ENCODE measurements at regions of chr4 and their contacts with region 1.

Region 1: DNA sequence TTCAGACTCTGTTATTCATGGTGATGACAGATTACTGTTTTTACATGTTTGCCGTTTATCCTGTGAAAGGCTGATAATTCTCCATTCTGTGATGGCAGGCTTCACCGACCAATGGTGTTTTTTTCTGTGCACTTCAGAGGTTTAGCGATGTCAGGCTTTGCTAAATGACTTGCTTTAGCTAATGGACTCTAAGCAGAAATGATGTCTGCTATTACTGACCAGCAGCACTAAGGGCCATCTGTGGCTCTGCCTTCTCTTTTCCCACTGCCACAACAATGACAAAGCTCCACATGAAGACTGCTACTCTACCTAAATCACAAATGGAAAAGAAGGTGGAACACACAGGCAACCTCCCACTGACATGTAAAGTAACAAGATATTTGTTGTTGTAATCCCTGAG is 68.4 kb upstream of the ALB start:
- DNase-seq: no peak
- ATAC-seq: no peak
- H3K4me3 ChIP-seq: no peak overlapping the region
- H3K27ac ChIP-seq: no peak overlapping the region
- H3K4me1 ChIP-seq: no peaks in the 10 kb centered on the region
- H3K27me3 ChIP-seq: no peaks in the 10 kb centered on the region

Region 2: DNA sequence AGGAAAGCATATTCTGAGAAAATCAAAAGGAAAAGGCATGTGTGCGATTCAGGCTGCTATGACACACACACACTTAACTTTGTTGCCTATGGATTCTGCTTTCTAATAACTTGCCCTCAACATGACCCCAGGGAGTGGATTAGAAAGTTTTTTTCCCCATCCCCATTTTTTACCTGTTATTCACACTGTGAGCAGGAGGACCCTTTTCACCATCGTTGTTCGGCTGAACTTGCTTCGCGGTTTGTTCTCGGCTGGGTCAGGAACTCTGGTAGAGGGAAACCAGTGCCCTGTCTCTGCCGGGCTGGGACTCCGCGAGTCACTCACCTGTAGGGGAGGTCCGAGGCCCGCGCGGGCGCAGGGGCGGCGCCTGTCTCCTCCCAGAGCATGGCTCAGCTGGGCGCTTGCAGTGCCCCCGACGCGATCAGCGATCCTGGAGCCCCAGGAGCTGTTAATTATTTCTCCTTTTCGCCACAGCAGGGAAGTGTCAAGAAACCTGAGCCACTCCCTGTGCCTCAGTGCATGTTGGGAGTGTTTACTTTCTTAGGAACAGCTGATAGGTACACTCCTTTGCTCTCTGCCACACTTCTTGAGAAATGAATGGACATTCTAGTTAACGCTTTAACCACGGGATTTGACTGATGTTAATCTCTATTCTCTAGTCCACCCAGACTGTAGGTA is 284.6 kb after region 1 on chr4 and contains the start of gene RASSF6:
- intact Hi-C with region 1: loop called in 1 of 2 experiments (anchors 10 kb)
- DNase-seq: peak in 1 of 2 donors; percentile 72
- ATAC-seq: peak; percentile 52
- H3K4me3 ChIP-seq: no peak within 1 kb of the TSS
- H3K27ac ChIP-seq: no peak within 1 kb of the TSS
- H3K4me1 ChIP-seq: no peaks in the 10 kb centered on the region
- H3K27me3 ChIP-seq: peaks cover 0 to 2% of the 10 kb centered on the region in 2 donors
- total RNA-seq, gene RASSF6: not detected